Left cardiac atrium (tissue), 4 donors: ENCODE measurements at regions of chr20 and their contacts with region 1.

Region 1: GRCh38 chr20:8853805-8854338 is 215.0 kb upstream of the PLCB4 start:
- DNase-seq: no peak
- ATAC-seq: peak; percentile 85 to 87

Region 2: GRCh38 chr20:8764344-8764962 is 89.4 kb before region 1 on chr20:
- intact Hi-C with region 1: no loop called
- DNase-seq: no peak
- ATAC-seq: no peak

Region 3: DNA sequence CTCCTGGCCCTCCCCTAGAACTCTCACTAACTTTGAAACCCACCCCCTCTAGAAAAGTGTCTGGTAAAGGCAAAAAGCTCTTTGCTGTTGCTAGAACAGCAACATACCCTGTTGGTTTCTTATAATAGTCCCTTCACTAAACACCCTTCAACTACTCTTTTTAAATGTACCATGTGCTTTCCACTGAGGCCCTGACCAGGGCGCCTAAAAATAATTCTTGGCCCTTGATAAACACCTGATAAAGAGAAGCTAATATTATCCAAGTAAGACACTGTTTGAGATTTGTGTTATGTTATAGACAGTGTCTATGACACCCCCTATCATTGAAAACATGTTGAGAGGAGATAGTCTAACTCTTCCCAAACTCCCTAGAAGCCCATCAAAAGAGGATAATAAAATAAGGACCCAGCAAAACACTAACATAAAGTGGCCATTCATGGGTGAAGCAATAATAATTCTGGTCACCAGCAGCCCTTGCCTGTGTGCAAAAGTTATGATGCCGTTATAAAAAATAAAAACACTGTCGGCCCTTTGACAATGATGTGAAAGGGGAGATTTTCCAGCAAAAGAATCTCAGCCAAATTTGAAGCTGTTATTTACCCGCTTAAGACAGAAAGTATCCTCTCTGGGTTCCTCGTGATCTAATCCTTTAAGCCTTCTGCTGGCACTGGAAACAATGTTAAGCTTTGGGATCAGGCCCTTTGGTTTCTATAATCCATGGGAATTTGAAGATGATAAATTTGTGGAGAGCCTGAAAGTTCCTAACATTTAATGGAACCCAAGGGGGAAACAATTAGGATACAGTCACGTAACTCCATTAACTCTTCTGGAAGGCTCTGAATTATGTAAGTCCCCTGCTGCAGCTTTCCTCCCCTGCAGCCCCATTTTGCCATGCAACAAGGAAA is 92.4 kb after region 1 on chr20:
- intact Hi-C with region 1: loop called in 1 of 2 experiments (anchors 10 kb)
- DNase-seq: no peak
- ATAC-seq: peak; percentile 70 to 73

Region 4: GRCh38 chr20:10419550-10420133 is 1565.8 kb after region 1 on chr20:
- intact Hi-C with region 1: no loop called
- DNase-seq: no peak
- ATAC-seq: no peak